OCI-LY7 (cell line): ENCODE measurements at regions of chr14 and their contacts with region 1.

Region 1: DNA sequence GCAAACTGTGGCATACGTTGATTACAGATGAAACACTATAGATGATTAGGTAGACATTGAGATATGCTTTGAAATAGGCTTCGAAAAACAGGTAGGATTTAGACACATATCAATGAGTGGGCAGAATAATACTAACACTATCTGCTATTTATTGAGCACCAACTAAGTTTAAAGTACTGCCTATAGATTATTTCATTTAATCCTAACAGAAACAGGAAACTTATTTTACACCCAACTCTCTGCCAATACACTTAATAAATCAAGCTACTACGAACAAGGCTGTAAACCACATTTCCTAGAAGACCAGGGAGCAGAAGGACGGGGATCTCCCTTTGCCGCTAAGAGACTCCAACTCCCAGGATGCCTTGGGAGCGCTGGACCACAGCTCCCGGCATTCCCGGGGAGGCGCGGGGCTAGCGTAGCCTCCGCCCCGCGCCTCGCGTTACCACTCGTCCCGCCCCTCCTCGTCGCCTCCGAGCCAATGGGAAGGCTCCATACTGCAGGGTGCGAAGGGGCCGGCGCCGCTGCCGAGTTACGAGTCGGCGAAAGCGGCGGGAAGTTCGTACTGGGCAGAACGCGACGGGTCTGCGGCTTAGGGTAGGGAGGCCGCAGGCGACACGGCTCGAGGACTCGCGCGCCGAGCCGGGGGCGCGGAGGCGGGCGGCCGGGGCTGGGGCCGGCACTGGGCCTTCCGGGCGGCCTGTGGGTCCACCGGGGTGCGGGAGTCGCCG is at the start of gene VRK1:
- DNase-seq: peak; percentile 96
- H3K4me3 ChIP-seq: peak within 1 kb of the TSS; percentile 94
- H3K27ac ChIP-seq: peak within 1 kb of the TSS; percentile 77
- H3K4me1 ChIP-seq: peaks cover 22% of the 10 kb centered on the region
- CTCF ChIP-seq: no peak
- total RNA-seq, gene VRK1: 83.0 and 97.5 TPM in 2 replicates

Region 2: GRCh38 chr14:96362965-96363756 is 433.9 kb before region 1 on chr14 and contains the starts of genes ATG2B and GSKIP:
- CTCF ChIA-PET with region 1: no interaction called
- POLR2A ChIA-PET with region 1: no interaction called
- intact Hi-C with region 1: loop called (anchors 5 kb)
- DNase-seq: peak; percentile 98
- H3K4me3 ChIP-seq: peak within 1 kb of the TSS; percentile 93
- H3K27ac ChIP-seq: peak within 1 kb of the TSS; percentile 61
- H3K4me1 ChIP-seq: peaks cover 36% of the 10 kb centered on the region
- CTCF ChIP-seq: no peak
- total RNA-seq, gene ATG2B: 15.7 and 16.7 TPM in 2 replicates
- total RNA-seq, gene GSKIP: 7.7 and 12.5 TPM in 2 replicates

Region 3: GRCh38 chr14:96832351-96832750 is 35.3 kb after region 1 on chr14:
- CTCF ChIA-PET with region 1: no interaction called
- POLR2A ChIA-PET with region 1: no interaction called
- intact Hi-C with region 1: no loop called
- DNase-seq: no peak
- H3K4me3 ChIP-seq: no peak overlapping the region
- H3K27ac ChIP-seq: no peak overlapping the region
- H3K4me1 ChIP-seq: no peaks in the 10 kb centered on the region
- CTCF ChIP-seq: no peak